ENCODE measurements at regions of chr7 and their contacts with region 1.

Region 1: GRCh38 chr7:26284995-26285632 is 6.5 kb upstream of the SNX10 start:
- DNase-seq: no peak

Region 2: GRCh38 chr7:26090927-26091519 is 194.1 kb before region 1 on chr7:
- intact Hi-C with region 1: loop called (anchors 10 kb)
- DNase-seq: peak in 1 of 10 donors; percentile 32